Heart right ventricle (tissue), 16 donors: ENCODE measurements at regions of chr22 and their contacts with region 1.

Region 1: DNA sequence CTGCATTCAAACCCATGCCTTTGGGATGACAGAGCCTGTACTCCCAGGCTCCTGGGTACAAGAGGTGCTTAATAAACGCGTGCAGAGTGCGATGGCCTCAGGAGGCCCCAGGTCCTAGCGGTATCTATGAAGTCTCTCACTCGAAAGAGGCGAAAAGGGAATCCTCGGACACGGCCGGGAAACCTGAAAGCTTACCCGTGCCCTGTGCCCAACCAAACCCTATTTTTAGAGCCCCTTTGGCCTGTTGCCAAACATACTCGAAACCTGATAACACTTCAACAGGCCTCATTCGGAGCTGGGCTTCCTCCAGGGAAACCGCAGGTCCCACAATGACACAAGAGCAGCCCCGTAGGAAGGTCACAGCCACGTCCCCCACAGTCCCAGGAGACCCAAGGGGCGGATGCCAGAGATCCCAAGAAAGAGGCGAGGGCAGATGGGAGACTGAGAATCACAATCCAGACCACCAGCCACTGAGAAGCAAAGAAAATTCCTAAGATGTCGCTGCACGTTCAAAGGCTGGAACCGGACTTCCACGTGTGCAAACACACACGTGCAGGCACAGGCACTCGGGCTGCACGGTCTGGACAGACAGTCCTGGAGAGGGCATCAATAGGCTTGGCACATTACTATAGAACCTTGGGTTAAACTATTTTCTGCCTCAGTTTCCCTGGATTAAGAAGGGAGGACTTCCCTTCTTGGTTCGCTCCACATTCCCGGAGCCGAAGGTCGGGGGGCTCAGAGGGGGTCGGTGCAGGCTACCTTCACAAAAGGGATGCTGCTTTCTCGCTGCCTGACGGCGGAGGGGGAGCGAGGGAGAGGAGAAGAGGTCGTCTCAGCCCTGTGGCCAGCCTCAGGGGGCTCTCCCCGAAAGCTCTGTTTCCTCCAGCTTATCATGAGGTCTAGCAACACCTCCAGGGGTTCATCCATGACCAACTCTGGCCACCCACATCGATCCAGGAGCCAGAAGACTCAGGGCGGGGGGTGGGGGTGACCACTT is 8.2 kb downstream of the PDGFB start:
- DNase-seq: peak; percentile 69 to 90
- ATAC-seq: peak; percentile 16 to 65 (median 45)
- H3K4me3 ChIP-seq: peak overlapping the region in 6 of 10 donors; percentile 15 to 38 (median 24)
- H3K27ac ChIP-seq: peak overlapping the region; percentile 81 to 98 (median 92)
- H3K4me1 ChIP-seq: peaks cover 35 to 98% (median 94%) of the 10 kb centered on the region in 9 donors
- H3K27me3 ChIP-seq: peaks cover 0 to 90% (median 0%) of the 10 kb centered on the region in 7 donors
- CTCF ChIP-seq: no peak

Region 2: DNA sequence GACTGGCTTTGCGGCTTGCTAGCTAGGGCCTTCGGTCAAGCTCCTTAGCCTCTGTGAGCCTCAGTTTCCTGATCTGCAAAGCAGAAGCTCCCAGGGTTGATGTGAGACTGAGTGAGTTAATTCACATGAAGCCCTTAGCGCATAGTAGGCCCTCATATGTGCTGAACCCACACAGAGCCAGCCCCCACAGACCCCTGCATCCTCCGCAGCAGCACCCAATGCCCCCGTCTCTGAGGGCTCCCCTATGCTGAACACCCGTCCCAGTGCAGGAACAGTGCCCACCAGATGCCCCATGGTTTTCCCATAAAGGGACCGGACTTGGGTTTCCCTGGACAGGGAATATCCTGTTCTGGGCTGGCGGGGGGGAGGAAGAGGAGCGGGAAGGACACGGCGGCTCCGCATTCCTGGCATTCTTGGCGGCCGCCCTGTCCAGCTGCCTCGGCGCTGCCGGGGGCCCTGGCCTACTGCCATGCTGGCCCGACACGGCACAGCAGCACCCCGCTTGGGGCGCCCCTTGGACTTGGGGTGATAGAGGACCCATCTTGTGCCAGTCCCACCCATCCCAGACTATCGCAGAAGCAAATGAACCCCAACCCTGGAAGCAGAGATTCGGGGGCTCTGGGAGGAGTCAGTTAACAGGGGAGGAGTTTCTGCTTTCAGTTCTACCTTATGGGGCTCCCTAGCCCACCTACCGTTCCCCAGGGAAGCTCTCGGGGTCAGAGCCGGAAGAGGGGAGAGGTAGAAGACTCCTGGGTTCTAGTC is 60.5 kb before region 1 on chr22:
- intact Hi-C with region 1: loop called in 8 of 10 experiments (anchors 2 to 10 kb)
- DNase-seq: peak; percentile 73 to 76
- ATAC-seq: peak; percentile 42 to 74 (median 62)
- H3K4me3 ChIP-seq: peak overlapping the region in 1 of 10 donors; percentile 13
- H3K27ac ChIP-seq: peak overlapping the region; percentile 62 to 92 (median 84)
- H3K4me1 ChIP-seq: peaks cover 33 to 87% (median 77%) of the 10 kb centered on the region in 9 donors
- H3K27me3 ChIP-seq: no peaks in the 10 kb centered on the region
- CTCF ChIP-seq: no peak

Region 3: DNA sequence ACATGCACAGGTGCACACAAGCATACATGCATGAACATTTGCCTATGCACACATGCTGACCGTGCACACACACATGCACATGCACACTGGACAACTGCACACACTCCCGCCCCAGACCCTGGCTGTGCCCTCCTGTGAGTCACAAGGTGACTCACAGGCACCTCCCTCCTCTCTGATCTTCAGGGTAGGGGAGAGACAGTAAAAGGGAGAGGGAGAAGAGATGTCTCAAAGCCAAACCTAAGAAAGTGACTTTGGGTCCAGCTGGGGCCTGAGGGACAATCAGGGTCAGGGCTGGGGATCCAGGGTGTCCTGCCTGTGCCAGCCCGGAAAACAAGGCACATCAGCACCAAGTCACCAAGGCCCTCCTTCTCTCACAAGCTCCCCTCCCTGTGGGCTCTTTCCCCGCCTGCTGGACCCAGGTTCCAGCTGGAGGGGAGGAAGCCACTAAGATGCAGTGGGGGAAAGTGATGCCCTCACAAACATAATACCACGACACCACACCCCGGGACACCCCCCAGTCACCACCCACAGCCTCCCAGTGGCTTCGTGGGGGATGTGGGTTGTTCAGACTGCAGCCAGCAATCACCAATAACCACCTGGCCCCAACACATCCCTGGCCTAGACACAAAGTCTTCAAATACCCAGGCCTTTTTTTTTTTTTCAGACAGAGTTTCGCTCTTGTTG is 31.1 kb before region 1 on chr22:
- intact Hi-C with region 1: no loop called
- DNase-seq: no peak
- ATAC-seq: peak in 2 of 8 donors; percentile 28 to 68
- H3K4me3 ChIP-seq: no peak overlapping the region
- H3K27ac ChIP-seq: no peak overlapping the region
- H3K4me1 ChIP-seq: peaks cover 0 to 27% (median 0%) of the 10 kb centered on the region in 9 donors
- H3K27me3 ChIP-seq: no peaks in the 10 kb centered on the region
- CTCF ChIP-seq: no peak

Region 4: DNA sequence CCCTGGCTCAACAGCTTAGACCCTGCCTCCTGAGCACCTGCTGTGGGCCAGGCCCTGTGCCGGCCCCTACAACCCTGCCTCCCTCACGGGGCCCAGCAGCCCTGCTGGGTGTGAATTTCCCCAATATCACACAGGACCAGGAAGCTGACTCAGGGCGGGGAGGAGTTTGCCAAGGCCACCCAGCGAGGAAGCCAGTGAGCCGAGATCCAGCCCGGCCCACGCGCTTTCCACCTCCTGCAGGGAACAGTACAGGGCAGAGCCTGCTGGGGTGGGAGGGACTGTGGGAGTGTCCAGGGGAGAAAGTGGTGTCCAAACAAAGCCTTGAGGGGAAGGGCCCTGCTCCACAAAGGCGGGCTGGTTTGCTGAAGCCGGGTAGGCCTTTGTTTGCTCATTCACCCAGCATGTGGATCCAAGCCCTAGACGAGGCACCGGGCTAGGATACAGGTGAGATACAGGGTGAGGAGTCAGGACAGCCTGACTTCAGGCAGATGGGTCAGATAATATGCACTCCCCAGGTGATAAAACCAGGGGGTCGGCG is 56.0 kb after region 1 on chr22:
- intact Hi-C with region 1: loop called in 3 of 10 experiments (anchors 5 to 10 kb)
- DNase-seq: peak; percentile 90 to 94
- ATAC-seq: peak; percentile 85 to 93 (median 88)
- H3K4me3 ChIP-seq: no peak overlapping the region
- H3K27ac ChIP-seq: peak overlapping the region; percentile 41 to 93 (median 82)
- H3K4me1 ChIP-seq: peaks cover 26 to 57% (median 49%) of the 10 kb centered on the region in 9 donors
- H3K27me3 ChIP-seq: no peaks in the 10 kb centered on the region
- CTCF ChIP-seq: no peak

Region 5: GRCh38 chr22:39306581-39307361 is 70.2 kb after region 1 on chr22:
- intact Hi-C with region 1: loop called in 6 of 10 experiments (anchors 5 to 10 kb)
- DNase-seq: peak in 1 of 2 donors; percentile 47
- ATAC-seq: peak in 6 of 8 donors; percentile 20 to 52 (median 33)
- H3K4me3 ChIP-seq: no peak overlapping the region
- H3K27ac ChIP-seq: peak overlapping the region in 3 of 10 donors; percentile 9 to 36 (median 20)
- H3K4me1 ChIP-seq: peaks cover 6 to 47% (median 31%) of the 10 kb centered on the region in 9 donors
- H3K27me3 ChIP-seq: no peaks in the 10 kb centered on the region
- CTCF ChIP-seq: peak in 7 of 9 donors; percentile 40 to 62 (median 53)